A549 (cell line): ENCODE measurements at regions of chr12 and their contacts with region 1.

Region 1: DNA sequence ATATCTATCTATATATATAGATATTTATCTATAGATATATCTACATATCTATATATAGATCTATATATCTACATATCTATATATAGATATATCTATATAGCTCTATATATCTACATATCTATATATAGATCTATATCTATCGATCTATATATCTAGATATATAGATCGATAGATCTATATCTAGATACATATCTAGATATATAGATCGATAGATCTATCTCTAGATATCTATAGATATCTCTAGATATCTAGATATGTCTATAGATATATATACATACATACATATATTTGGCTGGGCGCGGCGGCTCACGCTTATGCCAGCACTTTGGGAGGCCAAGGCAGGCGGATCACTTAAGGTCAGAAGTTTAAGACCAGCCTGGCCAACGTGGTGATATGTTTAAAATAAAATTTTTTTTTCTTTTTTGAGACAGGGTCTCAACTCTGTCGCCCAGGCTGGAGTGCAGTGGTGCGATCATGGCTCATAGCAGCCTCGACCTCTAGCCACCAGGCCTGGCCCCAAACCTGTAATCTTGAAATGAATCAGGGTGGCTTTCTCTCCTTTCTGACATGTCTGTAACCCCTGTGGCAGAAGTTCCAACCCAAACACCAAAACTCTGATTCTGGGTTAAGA is 18.1 kb downstream of the ARPC3 start:
- DNase-seq: no peak
- ATAC-seq: no peak
- H3K4me3 ChIP-seq: peak overlapping the region; percentile 45
- H3K27ac ChIP-seq: peak overlapping the region; percentile 76 to 90
- H3K4me1 ChIP-seq: 0 out of 3 replicates have a peak, but pooled peaks cover 3% of the 10 kb centered on the region
- CTCF ChIP-seq: no peak
- EP300 ChIP-seq: no peak
- POLR2A ChIP-seq: no peak
- RAD21 ChIP-seq: no peak

Region 2: DNA sequence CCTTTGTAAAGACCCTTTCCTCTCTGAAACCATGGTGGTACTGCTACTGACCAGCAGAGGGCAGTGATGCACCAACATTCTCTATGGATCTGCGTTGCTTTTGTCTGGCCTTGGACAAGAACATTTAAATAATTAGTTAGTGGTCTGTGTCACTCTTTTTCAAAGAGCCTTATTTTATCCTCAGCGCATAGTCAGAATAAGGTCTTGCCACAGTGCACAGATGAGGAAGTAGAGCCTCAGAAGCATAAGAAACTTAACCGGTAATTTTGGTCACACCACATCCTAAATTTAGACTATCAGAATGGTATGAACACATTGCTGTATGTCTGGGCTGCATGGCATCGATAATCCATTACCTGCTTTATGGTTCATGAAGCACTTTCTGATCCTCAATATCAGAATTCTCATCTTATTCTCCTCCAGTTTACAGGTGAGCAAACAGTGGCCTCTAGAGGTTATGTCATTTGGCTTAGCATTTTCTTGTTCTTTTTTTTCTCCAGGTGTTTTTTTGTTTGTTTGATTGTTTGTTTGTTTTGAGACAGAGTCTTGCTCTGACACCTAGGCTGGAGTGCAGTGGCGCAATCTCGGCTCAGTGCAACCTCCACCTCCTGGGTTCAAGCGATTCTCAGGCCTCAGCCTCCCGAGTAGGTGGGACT is 331.6 kb before region 1 on chr12:
- CTCF ChIA-PET with region 1: interaction called, 24 read pairs
- POLR2A ChIA-PET with region 1: interaction called, 9 read pairs
- DNase-seq: peak; percentile 55 to 84
- ATAC-seq: peak; percentile 54 to 69; a peak in 5 of 6 replicates
- H3K4me3 ChIP-seq: no peak overlapping the region
- H3K27ac ChIP-seq: peak overlapping the region; percentile 73 to 96
- H3K4me1 ChIP-seq: peaks cover 25% of the 10 kb centered on the region
- CTCF ChIP-seq: peak; percentile 97
- EP300 ChIP-seq: no peak
- POLR2A ChIP-seq: no peak
- RAD21 ChIP-seq: peak; percentile 97 to 99

Region 3: DNA sequence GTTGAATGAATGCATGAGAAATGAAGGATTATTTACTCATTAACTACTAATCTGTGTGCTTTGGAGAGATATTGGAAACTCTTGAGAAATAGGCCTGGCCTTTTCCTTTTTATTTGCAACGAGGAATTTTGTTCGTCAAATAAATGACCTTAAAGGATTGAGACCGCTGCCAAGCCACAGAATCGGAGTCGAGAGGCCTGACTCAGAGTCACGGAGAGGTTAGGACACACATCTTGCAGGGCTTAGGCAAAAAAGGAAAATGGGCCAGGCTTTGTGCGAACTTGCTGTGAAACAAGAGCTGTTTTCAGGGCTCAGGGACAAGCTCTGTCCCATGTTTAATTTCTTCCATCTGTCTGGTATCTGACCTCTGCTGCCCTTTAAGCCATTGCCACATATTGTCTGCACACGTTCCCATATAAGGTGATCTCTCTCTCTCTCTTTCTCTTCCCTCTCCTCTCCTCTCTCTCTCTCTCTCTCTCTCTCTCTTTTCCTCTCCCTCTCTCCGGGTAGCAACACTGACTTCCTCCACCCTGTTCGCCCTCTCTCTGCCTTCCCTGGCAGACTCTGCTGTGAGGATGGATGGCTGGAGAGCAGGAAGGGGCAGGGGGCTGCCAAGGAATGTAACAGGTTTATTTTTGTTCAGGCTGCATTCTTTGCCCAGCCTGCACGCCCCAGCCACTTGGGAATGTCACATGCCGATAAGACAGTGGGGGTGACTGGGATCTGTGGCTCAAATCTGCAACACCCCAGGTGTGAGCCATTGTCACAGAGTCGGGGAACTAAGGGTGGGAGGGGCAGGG is 322.8 kb before region 1 on chr12:
- CTCF ChIA-PET with region 1: interaction called, 12 read pairs
- POLR2A ChIA-PET with region 1: interaction called, 6 read pairs
- DNase-seq: peak; percentile 77 to 100
- ATAC-seq: peak; percentile 83
- H3K4me3 ChIP-seq: peak overlapping the region; percentile 4; the same call in 1 of the 3 replicates
- H3K27ac ChIP-seq: peak overlapping the region; percentile 95 to 96
- H3K4me1 ChIP-seq: peaks cover 55% of the 10 kb centered on the region
- CTCF ChIP-seq: no peak
- EP300 ChIP-seq: peak; percentile 98 to 99
- POLR2A ChIP-seq: no peak
- RAD21 ChIP-seq: peak; percentile 12 to 48; a peak in 4 of 5 replicates

Region 4: DNA sequence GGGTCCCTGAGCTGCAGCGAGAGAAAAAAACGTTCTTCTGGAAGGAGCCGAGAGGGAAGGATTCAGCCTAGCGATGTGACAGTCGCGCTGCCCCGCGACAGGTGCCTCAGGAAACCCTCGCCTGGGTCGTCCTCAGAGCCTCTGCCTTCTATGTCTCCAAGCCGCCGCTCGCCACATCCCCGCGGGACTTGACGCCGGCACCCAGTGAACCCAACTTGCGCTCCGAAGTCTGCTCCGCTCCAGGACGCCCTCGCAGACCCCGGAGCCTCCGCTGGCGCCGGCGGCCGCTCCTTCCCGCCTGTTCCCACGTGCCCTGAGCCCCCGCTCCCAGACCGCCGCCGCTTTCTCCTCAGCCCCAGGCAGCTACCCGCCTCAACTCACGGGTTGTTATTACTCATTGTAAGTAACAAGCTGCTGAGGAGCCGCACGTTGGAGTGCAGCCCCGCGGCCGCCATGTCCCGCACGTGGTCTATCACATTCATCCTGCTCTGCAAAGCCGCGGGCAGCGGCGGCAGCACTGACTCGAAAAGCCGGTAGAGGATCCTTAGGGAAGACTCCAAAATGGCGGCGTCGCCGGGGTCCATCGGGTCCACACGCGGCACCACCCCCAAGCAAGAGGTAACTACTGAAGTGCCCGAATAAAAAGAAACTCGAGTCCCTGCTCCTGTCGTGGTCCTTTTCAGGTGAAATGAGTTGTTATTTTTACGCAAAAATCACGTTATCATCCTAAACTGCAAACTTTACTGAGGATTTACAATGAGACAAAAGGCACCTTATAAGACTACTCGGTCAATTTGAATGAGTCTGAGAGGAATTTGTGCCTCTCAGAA is 28.7 kb before region 1 on chr12 and contains the start of gene ANAPC7:
- CTCF ChIA-PET with region 1: interaction called, 21 read pairs
- POLR2A ChIA-PET with region 1: interaction called, 3 read pairs
- DNase-seq: peak; percentile 93 to 96
- ATAC-seq: peak; percentile 96 to 98
- H3K4me3 ChIP-seq: peak within 1 kb of the TSS; percentile 69
- H3K27ac ChIP-seq: peak within 1 kb of the TSS; percentile 96 to 98
- H3K4me1 ChIP-seq: peaks cover 9% of the 10 kb centered on the region; the same call in 2 of the 3 replicates
- CTCF ChIP-seq: no peak
- EP300 ChIP-seq: no peak
- POLR2A ChIP-seq: peak; percentile 88
- RAD21 ChIP-seq: no peak
- polyA plus RNA-seq, gene ANAPC7: 107 and 122 TPM in 2 replicates

Region 5: DNA sequence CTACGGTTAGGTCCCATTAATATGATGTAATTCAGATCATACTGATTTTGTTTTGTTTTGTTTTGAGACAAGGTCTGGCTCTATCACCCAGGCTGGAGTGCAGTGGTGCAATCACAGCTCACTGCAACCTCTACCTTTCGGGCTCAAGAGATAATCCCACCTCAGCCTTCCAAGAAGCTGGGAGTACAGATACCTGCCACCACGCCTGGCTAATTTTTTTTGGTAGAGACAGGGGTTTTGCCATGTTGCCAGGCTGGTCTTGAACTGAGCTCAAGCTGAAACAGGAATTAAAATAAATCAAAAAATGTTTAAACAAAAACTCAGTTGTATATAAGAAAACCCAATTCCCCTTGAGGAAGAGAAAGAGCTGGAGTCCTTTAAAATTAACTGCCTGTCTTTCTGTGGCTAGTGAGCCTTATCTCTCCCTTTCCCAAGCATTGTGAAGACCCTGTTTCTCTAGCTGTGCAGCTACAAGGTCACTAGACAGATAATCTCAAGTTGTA is 10.9 kb before region 1 on chr12:
- CTCF ChIA-PET with region 1: interaction called, 30 read pairs
- POLR2A ChIA-PET with region 1: no interaction called
- DNase-seq: no peak
- ATAC-seq: no peak
- H3K4me3 ChIP-seq: no peak overlapping the region
- H3K27ac ChIP-seq: no peak overlapping the region
- H3K4me1 ChIP-seq: peaks cover 4% of the 10 kb centered on the region; the same call in 2 of the 3 replicates
- CTCF ChIP-seq: no peak
- EP300 ChIP-seq: no peak
- POLR2A ChIP-seq: no peak
- RAD21 ChIP-seq: no peak

Region 6: DNA sequence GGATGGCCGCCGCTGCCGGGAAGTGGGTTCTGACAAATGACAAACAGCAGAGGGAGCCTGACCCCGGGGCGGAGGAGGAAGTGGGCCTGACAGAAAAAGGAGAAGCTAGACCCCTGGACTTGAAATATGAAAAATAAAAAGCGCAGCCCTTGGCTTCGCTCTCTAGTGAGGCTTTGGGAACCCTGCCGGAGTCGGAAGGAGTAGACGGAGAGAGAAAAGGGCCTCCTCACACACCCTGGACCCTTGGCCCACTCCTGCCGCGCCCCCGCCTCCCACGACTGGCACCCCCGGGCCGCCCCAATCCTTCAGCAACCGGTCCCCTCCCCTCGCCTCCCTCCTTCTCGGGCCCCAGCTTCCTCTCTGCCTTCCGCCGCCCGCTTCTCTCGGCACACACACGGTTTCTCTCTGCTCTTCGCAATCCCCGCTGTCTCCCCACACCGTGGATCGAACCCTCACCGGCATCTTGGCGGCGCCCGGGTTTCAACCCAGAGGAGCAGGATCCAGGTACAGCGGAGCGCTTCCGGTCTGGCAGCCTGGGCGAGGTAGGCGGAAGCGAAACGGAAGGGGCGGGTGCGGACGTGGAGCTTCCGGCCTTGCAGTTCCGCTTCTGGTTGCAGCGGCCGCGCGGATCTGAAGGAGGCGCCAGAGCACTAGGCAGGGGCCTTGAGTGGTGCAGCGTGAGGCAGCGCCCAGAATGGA is 17.9 kb after region 1 on chr12 and contains the start of gene ARPC3:
- CTCF ChIA-PET with region 1: interaction called, 30 read pairs
- POLR2A ChIA-PET with region 1: interaction called, 10 read pairs
- DNase-seq: peak; percentile 86 to 98
- ATAC-seq: peak; percentile 97 to 100
- H3K4me3 ChIP-seq: peak within 1 kb of the TSS; percentile 73
- H3K27ac ChIP-seq: peak within 1 kb of the TSS; percentile 88 to 98
- H3K4me1 ChIP-seq: peaks cover 13% of the 10 kb centered on the region; the same call in 1 of the 3 replicates
- CTCF ChIP-seq: peak; percentile 73
- EP300 ChIP-seq: no peak
- POLR2A ChIP-seq: peak; percentile 50; the same call in 1 of the 2 replicates
- RAD21 ChIP-seq: peak; percentile 84 to 89
- polyA plus RNA-seq, gene ARPC3: 83.3 and 171 TPM in 2 replicates

Region 7: GRCh38 chr12:110583137-110584059 is 151.3 kb after region 1 on chr12 and contains the start of gene PPTC7:
- CTCF ChIA-PET with region 1: no interaction called
- POLR2A ChIA-PET with region 1: interaction called, 15 read pairs
- DNase-seq: peak; percentile 89 to 95
- ATAC-seq: peak; percentile 89 to 96
- H3K4me3 ChIP-seq: peak within 1 kb of the TSS; percentile 93
- H3K27ac ChIP-seq: peak within 1 kb of the TSS; percentile 91 to 96
- H3K4me1 ChIP-seq: peaks cover 25% of the 10 kb centered on the region
- CTCF ChIP-seq: no peak
- EP300 ChIP-seq: no peak
- POLR2A ChIP-seq: peak; percentile 75
- RAD21 ChIP-seq: no peak
- polyA plus RNA-seq, gene PPTC7: 27.1 and 30.3 TPM in 2 replicates